HepG2 (cell line): ENCODE measurements at regions of chr1 and their contacts with region 1.

Region 1: DNA sequence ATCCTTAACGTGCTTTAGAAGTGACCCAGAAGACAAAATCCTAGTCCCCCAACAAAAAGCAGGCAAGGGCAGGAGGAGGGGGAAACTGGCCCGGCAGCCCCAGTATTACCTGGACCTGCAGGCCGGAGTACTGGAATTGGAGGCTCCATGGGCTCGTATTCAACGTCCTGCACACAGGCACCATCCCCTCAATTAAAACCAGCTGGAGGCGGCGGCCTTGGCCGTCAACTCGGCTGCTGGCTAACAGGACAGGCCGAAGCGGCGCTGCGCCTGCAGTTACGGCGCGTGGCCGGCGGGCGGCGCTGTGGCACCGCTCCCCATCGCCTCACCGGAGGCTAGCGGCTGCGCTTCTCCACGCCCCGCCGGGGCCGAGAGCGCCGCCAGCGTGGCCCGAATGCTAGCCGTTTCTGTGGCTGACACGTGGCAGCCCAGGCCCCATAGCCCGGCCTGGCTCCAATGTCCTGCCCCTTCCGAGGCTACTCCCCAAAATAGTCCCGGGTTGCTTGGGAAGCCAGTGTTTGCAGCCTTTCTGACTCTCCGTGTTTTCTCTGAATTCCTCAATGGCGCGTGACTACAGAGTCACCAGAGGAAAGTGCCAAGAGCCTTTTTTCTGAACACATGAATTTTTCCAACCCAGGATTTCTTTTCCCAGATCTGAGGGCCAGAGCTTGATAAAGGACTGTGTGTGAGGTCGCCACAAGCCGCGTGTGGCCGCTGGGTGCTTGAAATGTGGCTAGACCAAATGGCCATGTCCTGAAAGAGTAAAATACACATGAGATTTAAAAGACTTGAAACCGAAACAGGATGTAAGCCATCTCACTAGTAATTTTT is 82.5 kb downstream of the HHIPL2 start:
- DNase-seq: peak; percentile 91
- ATAC-seq: peak; percentile 99
- H3K4me3 ChIP-seq: peak overlapping the region; percentile 60 to 81 (median 74)
- H3K27ac ChIP-seq: peak overlapping the region; percentile 99
- H3K4me1 ChIP-seq: peaks cover 42% of the 10 kb centered on the region
- H3K27me3 ChIP-seq: no peaks in the 10 kb centered on the region
- CTCF ChIP-seq: peak; percentile 98
- EP300 ChIP-seq: no peak
- POLR2A ChIP-seq: peak; percentile 72 to 82
- RAD21 ChIP-seq: peak; percentile 100

Region 2: GRCh38 chr1:222390181-222390580 is 75.2 kb before region 1 on chr1:
- CTCF ChIA-PET with region 1: no interaction called
- POLR2A ChIA-PET with region 1: no interaction called
- in situ Hi-C with region 1: no loop called
- intact Hi-C with region 1: no loop called
- DNase-seq: no peak
- ATAC-seq: no peak
- H3K4me3 ChIP-seq: no peak overlapping the region
- H3K27ac ChIP-seq: no peak overlapping the region
- H3K4me1 ChIP-seq: no peaks in the 10 kb centered on the region
- H3K27me3 ChIP-seq: no peaks in the 10 kb centered on the region
- CTCF ChIP-seq: no peak
- EP300 ChIP-seq: no peak
- POLR2A ChIP-seq: no peak
- RAD21 ChIP-seq: no peak

Region 3: DNA sequence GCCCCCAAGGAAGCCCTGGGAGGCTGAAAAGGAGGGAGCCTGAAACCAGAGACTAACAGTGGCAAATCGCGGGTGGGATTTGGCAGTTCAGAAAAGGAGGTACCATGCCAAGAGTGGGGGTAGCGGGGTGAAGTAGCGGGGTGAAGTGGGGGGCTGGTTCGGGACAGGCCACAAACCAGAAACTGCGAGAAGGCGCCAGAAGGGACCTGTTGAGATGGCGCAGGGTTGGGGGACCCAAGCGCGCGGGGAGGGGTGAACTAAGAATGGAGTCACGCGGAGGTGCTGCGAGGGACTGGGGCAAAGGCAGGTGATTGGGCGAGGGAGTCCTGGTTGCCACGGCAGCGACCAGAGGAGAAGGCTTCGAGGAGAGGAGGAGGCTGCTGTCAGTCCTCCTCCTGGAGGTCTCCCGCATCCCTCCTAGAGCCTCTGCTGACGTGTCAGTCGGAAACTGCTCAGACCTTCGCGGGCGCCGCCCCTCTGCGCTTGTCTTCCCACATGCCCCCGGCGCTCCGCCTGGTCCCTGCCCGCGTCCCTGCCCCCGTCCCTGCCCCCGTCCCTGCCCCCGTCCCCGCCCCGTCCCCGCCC is 152.0 kb after region 1 on chr1:
- CTCF ChIA-PET with region 1: no interaction called
- POLR2A ChIA-PET with region 1: no interaction called
- in situ Hi-C with region 1: no loop called
- intact Hi-C with region 1: loop called (anchors 1 kb)
- DNase-seq: peak; percentile 77
- ATAC-seq: peak; percentile 89
- H3K4me3 ChIP-seq: peak overlapping the region; percentile 33 to 74 (median 57); a peak in 5 of 6 replicates
- H3K27ac ChIP-seq: no peak overlapping the region
- H3K4me1 ChIP-seq: peaks cover 38% of the 10 kb centered on the region
- H3K27me3 ChIP-seq: no peaks in the 10 kb centered on the region; a peak in 1 of 5 replicates
- CTCF ChIP-seq: no peak
- EP300 ChIP-seq: no peak
- POLR2A ChIP-seq: peak; percentile 53 to 61; a peak in 3 of 4 replicates
- RAD21 ChIP-seq: no peak

Region 4: DNA sequence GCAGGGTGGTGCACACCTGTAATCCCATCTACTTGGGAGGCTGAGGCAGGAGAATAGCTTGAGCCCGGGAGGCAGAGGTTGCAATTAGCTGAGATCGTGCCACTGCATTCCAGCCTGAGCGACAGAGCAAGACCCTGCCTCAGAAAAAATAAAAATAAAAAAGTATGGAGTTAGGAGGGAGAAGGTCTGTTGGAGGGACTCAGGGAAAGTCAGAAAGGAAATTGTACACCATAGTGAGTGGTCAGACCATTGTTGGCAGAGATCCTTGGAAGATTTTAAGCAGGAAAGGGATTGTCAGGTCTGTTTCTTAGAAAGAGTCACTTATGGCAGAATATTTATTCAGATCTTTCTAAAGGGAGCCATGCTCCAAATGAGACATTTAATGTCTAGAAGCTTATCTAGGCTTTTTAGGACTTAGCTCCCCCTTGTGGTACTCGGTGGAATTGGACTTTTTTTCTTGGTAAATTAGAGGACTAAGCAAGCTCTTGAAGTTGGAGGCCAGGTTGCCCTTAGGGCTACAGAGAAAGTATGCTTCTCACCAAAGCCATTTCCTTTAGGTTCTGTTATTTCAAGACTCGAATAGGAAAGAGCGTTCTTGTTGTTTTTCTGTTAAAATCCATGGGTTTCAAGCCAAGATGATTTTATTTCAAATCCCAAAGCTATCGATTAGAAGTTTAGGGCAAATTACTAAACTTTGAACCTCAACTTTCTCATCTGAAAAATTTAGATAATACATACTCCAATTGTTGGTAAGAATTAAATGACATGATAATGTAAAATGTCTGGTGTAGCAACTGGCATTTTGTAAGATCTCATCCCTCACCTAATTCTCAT is 169.0 kb after region 1 on chr1:
- CTCF ChIA-PET with region 1: interaction called, 44 read pairs
- POLR2A ChIA-PET with region 1: interaction called, 7 read pairs
- in situ Hi-C with region 1: loop called (anchors 5 kb)
- intact Hi-C with region 1: loop called (anchors 1 kb)
- DNase-seq: peak; percentile 87
- ATAC-seq: peak; percentile 84
- H3K4me3 ChIP-seq: no peak overlapping the region
- H3K27ac ChIP-seq: no peak overlapping the region
- H3K4me1 ChIP-seq: no peaks in the 10 kb centered on the region
- H3K27me3 ChIP-seq: no peaks in the 10 kb centered on the region
- CTCF ChIP-seq: peak; percentile 77
- EP300 ChIP-seq: no peak
- POLR2A ChIP-seq: no peak
- RAD21 ChIP-seq: peak; percentile 61; the same call in 1 of the 2 replicates

Region 5: DNA sequence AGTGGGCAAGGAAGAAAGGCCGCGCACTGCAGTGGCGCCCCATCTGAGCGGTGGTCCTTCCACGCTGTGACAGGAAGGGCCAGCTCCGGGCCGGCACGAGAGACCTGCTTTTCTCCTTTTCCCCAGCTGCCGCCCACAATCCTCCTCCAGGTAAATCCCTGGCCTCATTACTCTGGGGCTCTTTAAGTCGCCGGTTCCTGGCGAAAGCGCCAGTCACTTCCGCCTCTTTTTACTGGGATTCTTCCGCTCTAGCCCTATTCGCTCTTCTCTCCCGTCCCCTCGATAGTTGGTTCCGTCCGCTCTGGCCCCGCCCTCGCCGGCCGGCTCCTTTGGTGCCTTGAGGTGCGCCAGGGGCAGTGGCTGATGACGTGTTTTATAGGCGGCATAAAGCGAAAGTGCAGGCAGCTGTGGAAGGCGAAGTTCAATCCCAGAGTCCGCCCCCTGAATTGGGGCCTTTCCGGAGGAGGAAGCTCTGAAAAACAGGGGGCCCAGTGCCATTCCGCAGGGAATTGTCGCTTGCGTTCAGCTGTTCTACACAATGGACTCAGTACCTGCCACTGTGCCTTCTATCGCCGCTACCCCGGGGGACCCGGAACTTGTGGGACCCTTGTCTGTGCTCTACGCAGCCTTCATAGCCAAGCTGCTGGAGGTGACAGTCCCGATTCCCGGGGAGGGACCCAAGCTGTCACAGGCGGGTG is 178.7 kb after region 1 on chr1:
- CTCF ChIA-PET with region 1: no interaction called
- POLR2A ChIA-PET with region 1: interaction called, 10 read pairs
- in situ Hi-C with region 1: no loop called
- intact Hi-C with region 1: loop called (anchors 1 kb)
- DNase-seq: peak; percentile 98
- ATAC-seq: peak; percentile 96
- H3K4me3 ChIP-seq: peak overlapping the region; percentile 73 to 92 (median 88)
- H3K27ac ChIP-seq: peak overlapping the region; percentile 93
- H3K4me1 ChIP-seq: peaks cover 18% of the 10 kb centered on the region
- H3K27me3 ChIP-seq: no peaks in the 10 kb centered on the region; a peak in 1 of 5 replicates
- CTCF ChIP-seq: no peak; the same call in 1 of the 2 replicates
- EP300 ChIP-seq: peak in 1 of 2 experiments; percentile 47; a peak in 2 of 4 replicates
- POLR2A ChIP-seq: peak; percentile 52 to 92
- RAD21 ChIP-seq: no peak

Region 6: DNA sequence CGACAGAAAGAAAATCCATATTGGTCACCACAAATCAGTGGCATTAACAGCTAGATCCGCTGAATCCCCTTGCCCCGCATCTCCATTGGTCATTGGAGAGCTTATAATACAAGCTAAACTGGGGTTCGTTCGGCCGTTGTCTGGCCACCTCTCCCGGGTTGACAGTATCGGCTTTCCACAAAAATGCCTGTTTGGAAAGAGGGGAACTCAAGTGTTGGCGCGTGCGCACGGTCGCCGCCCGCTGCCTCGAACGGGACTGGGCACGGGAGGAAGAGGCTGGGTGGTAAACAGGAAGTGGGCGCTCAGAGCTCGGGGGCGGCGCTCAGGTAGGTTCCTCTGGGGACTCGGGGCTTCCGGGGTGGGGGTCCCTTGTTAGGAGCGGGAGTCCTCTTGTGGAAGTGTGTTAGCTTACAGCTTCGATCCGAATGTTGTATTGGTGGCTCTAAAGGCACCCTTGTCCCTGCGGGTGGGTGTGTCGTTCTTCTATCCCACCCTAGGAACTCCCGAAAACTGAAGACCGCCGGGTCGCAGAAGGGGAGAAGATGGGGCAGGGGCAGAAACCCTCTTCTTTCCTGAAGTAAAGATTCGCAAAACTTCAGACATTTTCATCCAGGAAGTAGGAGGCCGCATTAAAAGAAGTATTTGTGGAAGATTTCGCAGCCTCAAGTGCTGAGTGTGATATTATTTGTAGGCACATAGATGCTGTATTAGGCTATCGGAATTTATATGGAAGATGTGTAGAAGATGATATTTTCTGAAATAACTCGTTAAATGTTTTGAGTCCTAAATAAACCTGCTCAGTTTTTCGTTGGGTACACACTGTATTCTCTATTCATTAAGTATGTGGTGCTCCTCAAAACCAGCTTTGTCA is 247.9 kb after region 1 on chr1:
- CTCF ChIA-PET with region 1: no interaction called
- POLR2A ChIA-PET with region 1: interaction called, 4 read pairs
- in situ Hi-C with region 1: loop called (anchors 10 kb)
- intact Hi-C with region 1: loop called (anchors 1 kb)
- DNase-seq: peak; percentile 95
- ATAC-seq: peak; percentile 90
- H3K4me3 ChIP-seq: peak overlapping the region; percentile 66 to 87 (median 75)
- H3K27ac ChIP-seq: peak overlapping the region; percentile 92
- H3K4me1 ChIP-seq: peaks cover 27% of the 10 kb centered on the region
- H3K27me3 ChIP-seq: no peaks in the 10 kb centered on the region; a peak in 2 of 5 replicates
- CTCF ChIP-seq: peak; percentile 54
- EP300 ChIP-seq: peak in 1 of 2 experiments; percentile 28; a peak in 1 of 4 replicates
- POLR2A ChIP-seq: peak; percentile 59 to 65; a peak in 3 of 4 replicates
- RAD21 ChIP-seq: no peak; the same call in 1 of the 2 replicates